ENCODE measurements at regions of chr14 and their contacts with region 1.

Region 1: GRCh38 chr14:31084385-31084784 is 58.2 kb upstream of the STRN3 start:
- DNase-seq: peak in 1 of 2 experiments; percentile 15
- H3K4me3 ChIP-seq: no peak overlapping the region
- H3K4me3 Mint-ChIP-seq: no peak overlapping the region
- H3K27ac Mint-ChIP-seq: no peak overlapping the region
- H3K4me1 ChIP-seq: no peaks in the 10 kb centered on the region
- H3K4me1 Mint-ChIP-seq: no peaks in the 10 kb centered on the region
- H3K27me3 ChIP-seq: no peaks in the 10 kb centered on the region
- H3K27me3 Mint-ChIP-seq: no peaks in the 10 kb centered on the region
- CTCF ChIP-seq: peak in 1 of 2 experiments; percentile 11

Region 2: DNA sequence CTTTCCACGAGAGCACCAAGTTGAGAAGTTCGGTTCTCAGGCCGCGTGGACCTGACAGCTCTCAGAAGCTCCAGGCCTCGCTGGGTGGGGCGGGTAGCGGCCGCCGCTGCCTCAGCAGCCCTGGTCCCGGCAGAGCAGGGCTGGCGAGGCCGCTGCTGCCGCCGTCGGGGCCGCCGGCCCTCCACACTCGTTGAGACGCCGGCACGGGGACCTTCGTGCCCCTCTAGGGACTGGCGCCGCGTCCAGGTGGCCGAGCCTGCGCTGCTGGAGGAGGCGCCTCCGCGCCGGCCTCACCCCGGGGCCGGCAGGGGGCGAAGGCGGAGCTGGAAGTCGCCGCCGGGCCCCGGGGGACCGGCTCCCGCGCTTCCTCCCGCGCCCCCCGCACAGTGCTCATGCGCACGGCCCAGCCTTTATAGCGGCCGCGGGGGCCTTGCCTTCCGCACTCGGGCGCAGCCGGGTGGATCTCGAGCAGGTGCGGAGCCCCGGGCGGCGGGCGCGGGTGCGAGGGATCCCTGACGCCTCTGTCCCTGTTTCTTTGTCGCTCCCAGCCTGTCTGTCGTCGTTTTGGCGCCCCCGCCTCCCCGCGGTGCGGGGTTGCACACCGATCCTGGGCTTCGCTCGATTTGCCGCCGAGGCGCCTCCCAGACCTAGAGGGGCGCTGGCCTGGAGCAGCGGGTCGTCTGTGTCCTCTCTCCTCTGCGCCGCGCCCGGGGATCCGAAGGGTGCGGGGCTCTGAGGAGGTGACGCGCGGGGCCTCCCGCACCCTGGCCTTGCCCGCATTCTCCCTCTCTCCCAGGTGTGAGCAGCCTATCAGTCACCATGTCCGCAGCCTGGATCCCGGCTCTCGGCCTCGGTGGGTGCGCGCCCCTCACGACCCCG is 210.0 kb before region 1 on chr14 and contains the start of gene COCH:
- CTCF ChIA-PET with region 1: no interaction called
- POLR2A ChIA-PET with region 1: no interaction called
- intact Hi-C with region 1: no loop called
- DNase-seq: peak; percentile 69 to 82
- H3K4me3 ChIP-seq: peak within 1 kb of the TSS; percentile 90
- H3K4me3 Mint-ChIP-seq: peak within 1 kb of the TSS; percentile 89
- H3K27ac Mint-ChIP-seq: no peak within 1 kb of the TSS
- H3K4me1 ChIP-seq: no peaks in the 10 kb centered on the region
- H3K4me1 Mint-ChIP-seq: no peaks in the 10 kb centered on the region
- H3K27me3 ChIP-seq: no peaks in the 10 kb centered on the region
- H3K27me3 Mint-ChIP-seq: no peaks in the 10 kb centered on the region
- CTCF ChIP-seq: peak; percentile 33 to 59
- total RNA-seq, gene COCH: 32.2 and 33.4 TPM in 2 replicates

Region 3: DNA sequence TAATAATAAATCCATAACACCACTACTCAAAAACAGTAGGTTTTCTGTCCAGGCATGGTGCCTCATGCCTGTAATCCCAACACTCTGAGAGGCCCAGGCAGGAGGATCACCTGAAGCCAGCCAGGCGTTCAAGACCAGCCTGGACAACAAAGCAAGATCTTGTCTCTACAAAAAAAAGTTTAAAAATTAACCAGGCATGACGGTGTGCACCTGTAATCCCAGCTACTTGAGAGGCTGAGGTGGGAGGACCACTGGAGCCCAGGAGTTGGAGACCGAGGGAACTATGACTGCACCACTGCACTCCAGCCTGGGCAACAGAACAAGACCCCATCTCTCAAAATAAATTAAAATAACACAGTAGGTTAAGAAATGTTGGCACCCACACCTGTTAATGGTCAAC is 103.4 kb before region 1 on chr14:
- CTCF ChIA-PET with region 1: no interaction called
- POLR2A ChIA-PET with region 1: no interaction called
- intact Hi-C with region 1: loop called (anchors 1 kb)
- DNase-seq: peak in 1 of 2 experiments; percentile 8
- H3K4me3 ChIP-seq: no peak overlapping the region
- H3K4me3 Mint-ChIP-seq: no peak overlapping the region
- H3K27ac Mint-ChIP-seq: no peak overlapping the region
- H3K4me1 ChIP-seq: peaks cover 9% of the 10 kb centered on the region; the same call in 1 of the 2 replicates
- H3K4me1 Mint-ChIP-seq: no peaks in the 10 kb centered on the region
- H3K27me3 ChIP-seq: no peaks in the 10 kb centered on the region
- H3K27me3 Mint-ChIP-seq: no peaks in the 10 kb centered on the region
- CTCF ChIP-seq: no peak

Region 4: GRCh38 chr14:31026395-31027118 is 57.8 kb before region 1 on chr14:
- CTCF ChIA-PET with region 1: interaction called, 4 read pairs
- POLR2A ChIA-PET with region 1: no interaction called
- intact Hi-C with region 1: loop called (anchors 1 kb)
- DNase-seq: peak; percentile 97
- H3K4me3 ChIP-seq: peak overlapping the region; percentile 88
- H3K4me3 Mint-ChIP-seq: peak overlapping the region; percentile 100
- H3K27ac Mint-ChIP-seq: peak overlapping the region; percentile 94
- H3K4me1 ChIP-seq: peaks cover 10% of the 10 kb centered on the region
- H3K4me1 Mint-ChIP-seq: peaks cover 20% of the 10 kb centered on the region
- H3K27me3 ChIP-seq: no peaks in the 10 kb centered on the region
- H3K27me3 Mint-ChIP-seq: no peaks in the 10 kb centered on the region
- CTCF ChIP-seq: no peak

Region 5: GRCh38 chr14:31127690-31128089 is 43.3 kb after region 1 on chr14:
- CTCF ChIA-PET with region 1: no interaction called
- POLR2A ChIA-PET with region 1: no interaction called
- intact Hi-C with region 1: no loop called
- DNase-seq: peak in 1 of 2 experiments; percentile 25
- H3K4me3 ChIP-seq: no peak overlapping the region
- H3K4me3 Mint-ChIP-seq: no peak overlapping the region
- H3K27ac Mint-ChIP-seq: peak overlapping the region; percentile 43
- H3K4me1 ChIP-seq: no peaks in the 10 kb centered on the region
- H3K4me1 Mint-ChIP-seq: no peaks in the 10 kb centered on the region
- H3K27me3 ChIP-seq: no peaks in the 10 kb centered on the region
- H3K27me3 Mint-ChIP-seq: no peaks in the 10 kb centered on the region
- CTCF ChIP-seq: no peak